Activated T-helper 1 cell treated with anti-CD3 and anti-CD28 coated beads, Interleukin-12 subunit alpha, Interleukin-12 subunit beta, Interleukin-2, Interleukin-4 antibody, amounts not matched to agents 30 ng/mL and 10 ng/mL and 1 ng/mL, durations not matched to agents 14 hours and 24 hours and 36 hours (primary cell): ENCODE measurements at regions of chr14 and their contacts with region 1.

Region 1: DNA sequence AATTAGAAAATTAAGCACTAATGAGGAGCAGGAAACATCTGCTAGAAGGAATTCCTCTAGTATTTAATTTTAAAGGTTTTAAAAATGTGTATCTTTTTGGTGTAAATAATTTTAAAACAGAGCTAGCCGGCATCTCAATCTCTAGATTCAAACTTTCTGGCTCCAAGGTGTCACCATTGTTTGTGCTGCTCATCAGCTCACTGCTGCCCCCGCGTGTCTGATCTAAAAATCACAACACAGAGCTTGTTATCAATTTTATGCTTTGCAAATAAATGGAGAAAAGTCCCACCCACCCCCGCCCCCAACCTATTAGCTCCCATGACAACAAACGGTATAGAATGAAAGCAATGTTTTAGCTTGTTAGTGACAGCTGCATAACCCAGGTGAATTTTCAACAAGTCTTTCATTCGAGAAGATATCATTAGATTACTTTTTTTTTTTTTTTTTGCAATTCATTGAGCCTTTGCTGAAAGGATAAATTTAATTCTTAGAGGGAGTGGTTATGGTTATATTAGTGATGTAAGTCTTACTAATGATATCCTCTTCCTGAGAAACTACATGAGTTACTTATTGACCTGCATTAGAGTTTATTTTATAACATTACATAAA is 11.3 kb upstream of the ABHD12B start:
- DNase-seq: peak; percentile 71
- H3K4me3 Mint-ChIP-seq: peak overlapping the region; percentile 84
- H3K27ac Mint-ChIP-seq: no peak overlapping the region
- H3K4me1 Mint-ChIP-seq: peaks cover 18% of the 10 kb centered on the region
- H3K27me3 Mint-ChIP-seq: peaks cover 28% of the 10 kb centered on the region

Region 2: GRCh38 chr14:50542941-50543418 is 317.6 kb before region 1 on chr14:
- intact Hi-C with region 1: loop called (anchors 1 kb)
- DNase-seq: peak; percentile 15
- H3K4me3 Mint-ChIP-seq: no peak overlapping the region
- H3K27ac Mint-ChIP-seq: no peak overlapping the region
- H3K4me1 Mint-ChIP-seq: peaks cover 16% of the 10 kb centered on the region
- H3K27me3 Mint-ChIP-seq: peaks cover 13% of the 10 kb centered on the region

Region 3: GRCh38 chr14:50619556-50620141 is 240.9 kb before region 1 on chr14:
- intact Hi-C with region 1: loop called (anchors 1 kb)
- DNase-seq: no peak
- H3K4me3 Mint-ChIP-seq: no peak overlapping the region
- H3K27ac Mint-ChIP-seq: no peak overlapping the region
- H3K4me1 Mint-ChIP-seq: no peaks in the 10 kb centered on the region
- H3K27me3 Mint-ChIP-seq: no peaks in the 10 kb centered on the region

Region 4: GRCh38 chr14:50647753-50648152 is 212.8 kb before region 1 on chr14:
- intact Hi-C with region 1: no loop called
- DNase-seq: no peak
- H3K4me3 Mint-ChIP-seq: no peak overlapping the region
- H3K27ac Mint-ChIP-seq: no peak overlapping the region
- H3K4me1 Mint-ChIP-seq: no peaks in the 10 kb centered on the region
- H3K27me3 Mint-ChIP-seq: no peaks in the 10 kb centered on the region

Region 5: DNA sequence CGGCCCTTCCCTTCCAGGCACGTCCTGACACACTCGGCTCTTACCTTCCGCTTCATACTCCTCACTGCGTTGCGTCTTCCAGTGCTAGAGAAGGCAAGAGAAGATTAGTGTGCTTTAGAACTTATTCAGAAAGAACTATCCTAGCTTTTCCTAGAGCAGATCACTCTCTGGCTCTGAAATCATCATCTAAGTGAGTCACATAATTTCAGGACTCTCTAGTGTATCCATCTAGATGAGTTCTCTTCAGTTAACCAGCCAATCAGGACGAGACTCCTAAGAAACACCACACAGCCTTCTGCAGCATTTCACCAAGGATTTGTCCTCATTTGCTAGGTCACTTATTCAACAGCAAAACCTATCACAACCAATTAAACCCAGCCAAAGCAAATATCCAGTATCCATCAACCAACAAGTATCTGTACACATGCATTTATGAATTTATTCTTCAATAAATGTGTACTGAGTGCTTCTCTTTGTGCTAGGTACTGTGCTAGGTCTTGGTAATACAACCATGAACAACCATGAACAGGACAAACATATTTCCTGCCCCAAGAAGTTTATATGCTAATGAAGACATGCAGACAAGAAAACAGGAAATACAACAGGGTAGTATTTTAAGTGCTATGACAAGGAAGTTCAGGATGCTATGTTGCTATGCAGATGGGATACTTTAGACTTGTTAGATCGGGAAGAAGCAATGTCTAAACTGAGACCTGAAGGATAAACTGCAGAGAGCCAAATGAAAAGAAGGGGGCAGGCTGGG is 81.7 kb before region 1 on chr14:
- intact Hi-C with region 1: loop called (anchors 1 kb)
- DNase-seq: no peak
- H3K4me3 Mint-ChIP-seq: no peak overlapping the region
- H3K27ac Mint-ChIP-seq: no peak overlapping the region
- H3K4me1 Mint-ChIP-seq: peaks cover 25% of the 10 kb centered on the region
- H3K27me3 Mint-ChIP-seq: no peaks in the 10 kb centered on the region

Region 6: DNA sequence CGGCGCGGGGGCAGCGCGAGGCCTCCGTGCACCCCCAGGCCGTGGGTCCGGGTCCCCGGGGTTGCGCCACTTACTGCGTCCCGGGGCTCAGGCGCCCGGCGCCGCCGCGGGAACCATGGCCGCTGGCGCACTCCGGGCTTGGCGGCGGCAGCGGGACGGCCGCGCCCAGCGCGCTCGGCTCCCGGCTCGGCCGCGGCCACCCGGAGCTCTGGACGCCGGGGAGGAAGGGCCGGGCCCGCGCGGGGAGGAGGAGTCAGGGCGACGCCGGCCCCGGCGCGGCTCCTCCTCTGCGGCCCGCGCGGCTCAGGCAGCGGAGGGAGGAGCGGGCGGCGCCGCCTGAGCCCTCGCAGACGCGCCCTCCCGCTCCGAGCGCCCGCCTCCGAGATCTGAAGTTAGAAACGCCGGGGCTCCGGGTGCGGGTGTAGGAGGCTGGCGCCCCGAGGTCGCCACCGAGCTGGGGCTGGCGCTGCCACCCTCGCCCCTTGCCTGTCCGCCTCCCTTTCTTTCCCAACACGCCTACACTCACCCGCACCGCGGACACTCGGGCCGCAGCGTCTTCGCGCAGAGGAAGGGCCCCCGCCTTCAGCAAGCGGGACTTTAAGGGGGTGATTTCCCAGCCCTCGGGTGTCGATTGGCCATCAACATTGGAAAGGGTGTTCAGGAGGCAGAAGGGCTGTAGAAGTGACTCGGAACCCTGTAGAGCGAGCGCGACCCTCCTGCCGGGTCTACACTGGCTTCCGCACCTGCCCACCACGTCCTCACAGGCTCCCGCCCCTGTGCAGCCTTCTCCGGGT is 29.5 kb before region 1 on chr14 and contains the start of gene NIN:
- intact Hi-C with region 1: loop called (anchors 1 kb)
- DNase-seq: peak; percentile 73
- H3K4me3 Mint-ChIP-seq: peak within 1 kb of the TSS; percentile 93
- H3K27ac Mint-ChIP-seq: peak within 1 kb of the TSS; percentile 95
- H3K4me1 Mint-ChIP-seq: peaks cover 67% of the 10 kb centered on the region
- H3K27me3 Mint-ChIP-seq: peaks cover 16% of the 10 kb centered on the region
- total RNA-seq, gene NIN: 39.9 and 43.3 TPM in 2 replicates

Region 7: DNA sequence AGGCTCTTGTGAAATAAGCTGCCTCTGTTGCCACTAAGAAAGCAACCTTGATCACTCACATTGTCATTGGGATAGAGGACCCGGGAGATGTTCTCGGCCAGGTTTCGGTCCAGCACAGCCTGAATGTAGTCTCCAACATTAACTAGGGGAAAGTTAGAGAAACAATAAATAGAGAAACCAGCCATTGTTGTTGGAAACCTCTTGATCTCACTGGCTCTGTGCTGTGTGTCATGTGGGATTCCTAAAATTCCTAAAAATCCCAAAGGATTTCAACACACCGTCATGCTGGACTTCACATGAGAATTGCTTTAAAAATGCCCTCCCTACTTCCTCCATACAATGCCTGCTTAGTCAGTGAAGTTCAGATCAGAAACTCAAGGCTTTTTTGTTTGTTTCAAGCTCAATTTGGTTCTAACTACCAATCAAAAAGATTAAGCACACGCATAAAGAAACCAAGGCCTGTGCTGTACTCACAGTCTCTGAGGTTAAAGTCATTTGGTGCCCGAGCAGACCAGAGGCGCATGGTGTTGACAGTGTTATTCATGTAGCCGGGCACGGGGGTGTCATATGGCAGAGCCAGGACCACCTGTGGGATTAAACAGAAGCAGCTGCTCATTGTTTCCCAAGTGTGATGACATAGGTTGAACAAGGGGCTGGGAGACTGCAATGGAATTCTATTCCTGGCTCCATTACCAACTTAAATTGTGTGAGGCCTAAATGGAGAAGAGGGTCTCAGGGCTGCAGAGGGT is 60.1 kb after region 1 on chr14:
- intact Hi-C with region 1: no loop called
- DNase-seq: no peak
- H3K4me3 Mint-ChIP-seq: no peak overlapping the region
- H3K27ac Mint-ChIP-seq: no peak overlapping the region
- H3K4me1 Mint-ChIP-seq: no peaks in the 10 kb centered on the region
- H3K27me3 Mint-ChIP-seq: peaks cover 8% of the 10 kb centered on the region